ENCODE measurements at regions of chr10 and their contacts with region 1.

Region 1: DNA sequence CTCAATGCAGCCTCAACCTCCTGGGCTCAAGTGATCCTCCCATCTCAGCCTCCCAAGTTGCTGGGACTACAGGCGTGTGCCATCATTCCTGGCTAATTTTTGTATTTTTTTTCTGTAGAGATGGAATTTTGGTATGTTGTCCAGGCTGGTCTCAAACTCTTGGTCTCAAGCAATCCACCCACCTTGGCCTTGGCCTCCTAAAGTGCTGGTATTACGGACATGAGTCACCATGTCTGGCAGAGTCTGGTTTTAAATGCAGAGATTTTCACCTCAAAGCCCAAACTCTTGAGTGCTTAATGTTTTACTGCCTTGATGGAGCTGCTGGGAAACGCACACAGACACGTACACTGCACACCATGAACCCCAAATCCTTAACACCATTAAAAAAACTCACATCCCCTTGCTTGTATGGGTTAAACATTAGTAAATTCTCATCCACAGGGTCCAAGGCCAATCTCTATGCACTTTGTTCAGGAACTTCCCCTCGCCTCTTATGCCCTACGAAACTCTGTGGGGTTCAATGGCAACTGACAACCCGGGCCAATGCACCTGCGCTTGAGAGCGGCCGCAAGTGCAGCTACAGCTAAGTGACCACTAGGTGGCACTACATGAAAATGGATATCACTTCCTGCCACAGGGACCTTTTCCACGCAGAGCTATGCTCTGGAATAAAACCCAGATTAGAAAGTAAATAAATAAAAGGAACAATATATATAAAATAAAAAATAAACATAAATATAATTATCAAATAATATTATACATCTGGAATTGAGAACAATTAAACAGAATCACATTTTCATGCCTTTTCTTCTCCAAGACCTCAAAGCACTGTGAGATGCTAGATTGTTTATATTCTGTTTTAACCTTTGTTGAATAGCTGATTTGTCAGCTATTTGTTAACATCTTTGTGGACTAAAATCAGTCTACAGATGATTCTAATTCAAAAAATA is 66.9 kb upstream of the AFAP1L2 start:
- DNase-seq: peak; percentile 66 to 67
- H3K4me3 ChIP-seq: no peak overlapping the region
- H3K27ac ChIP-seq: peak overlapping the region; percentile 45 to 100 (median 46)
- H3K4me1 ChIP-seq: peaks cover 28 to 39% of the 10 kb centered on the region in 2 donors
- H3K27me3 ChIP-seq: no peaks in the 10 kb centered on the region
- CTCF ChIP-seq: peak; percentile 78 to 89 (median 84)
- POLR2A ChIP-seq: no peak

Region 2: GRCh38 chr10:114548662-114549061 is 77.4 kb after region 1 on chr10:
- intact Hi-C with region 1: loop called (anchors 5 kb)
- DNase-seq: peak; percentile 88 to 90
- H3K4me3 ChIP-seq: no peak overlapping the region
- H3K27ac ChIP-seq: peak overlapping the region; percentile 19 to 49 (median 47)
- H3K4me1 ChIP-seq: peaks cover 21 to 24% of the 10 kb centered on the region in 2 donors
- H3K27me3 ChIP-seq: no peaks in the 10 kb centered on the region
- CTCF ChIP-seq: peak in 4 of 6 experiments; percentile 65 to 95 (median 83)
- POLR2A ChIP-seq: peak in 1 of 2 donors; percentile 16